MCF 10A (cell line): ENCODE measurements at regions of chr15 and their contacts with region 1.

Region 1: DNA sequence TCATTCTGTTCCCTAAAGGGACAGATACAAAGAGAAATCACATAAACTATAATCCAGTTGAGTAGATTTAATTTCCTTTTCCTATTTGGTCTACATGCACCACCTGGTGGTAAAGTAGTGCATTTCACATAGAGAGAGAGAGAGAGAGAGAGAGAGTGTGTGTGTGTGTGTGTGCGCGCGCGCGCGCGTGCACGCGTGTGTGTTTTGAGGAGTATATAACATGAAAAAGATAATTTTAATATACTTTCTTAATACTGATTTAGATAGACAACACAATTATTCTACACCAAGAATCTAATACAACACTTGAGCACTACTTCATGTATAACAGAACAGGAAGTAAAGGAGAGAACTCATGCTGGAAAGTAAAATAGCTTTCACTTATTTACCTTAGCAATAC is 1.1 kb upstream of the FGF7 start:
- DNase-seq: peak; percentile 70
- H3K4me3 Mint-ChIP-seq: peak overlapping the region; percentile 58
- H3K27ac Mint-ChIP-seq: no peak overlapping the region
- H3K4me1 Mint-ChIP-seq: peaks cover 7% of the 10 kb centered on the region
- H3K27me3 Mint-ChIP-seq: no peaks in the 10 kb centered on the region
- CTCF ChIP-seq: peak; percentile 72

Region 2: GRCh38 chr15:49110158-49110944 is 311.6 kb before region 1 on chr15:
- CTCF ChIA-PET with region 1: no interaction called
- POLR2A ChIA-PET with region 1: no interaction called
- intact Hi-C with region 1: no loop called
- DNase-seq: no peak
- H3K4me3 Mint-ChIP-seq: no peak overlapping the region
- H3K27ac Mint-ChIP-seq: no peak overlapping the region
- H3K4me1 Mint-ChIP-seq: no peaks in the 10 kb centered on the region
- H3K27me3 Mint-ChIP-seq: no peaks in the 10 kb centered on the region
- CTCF ChIP-seq: no peak

Region 3: DNA sequence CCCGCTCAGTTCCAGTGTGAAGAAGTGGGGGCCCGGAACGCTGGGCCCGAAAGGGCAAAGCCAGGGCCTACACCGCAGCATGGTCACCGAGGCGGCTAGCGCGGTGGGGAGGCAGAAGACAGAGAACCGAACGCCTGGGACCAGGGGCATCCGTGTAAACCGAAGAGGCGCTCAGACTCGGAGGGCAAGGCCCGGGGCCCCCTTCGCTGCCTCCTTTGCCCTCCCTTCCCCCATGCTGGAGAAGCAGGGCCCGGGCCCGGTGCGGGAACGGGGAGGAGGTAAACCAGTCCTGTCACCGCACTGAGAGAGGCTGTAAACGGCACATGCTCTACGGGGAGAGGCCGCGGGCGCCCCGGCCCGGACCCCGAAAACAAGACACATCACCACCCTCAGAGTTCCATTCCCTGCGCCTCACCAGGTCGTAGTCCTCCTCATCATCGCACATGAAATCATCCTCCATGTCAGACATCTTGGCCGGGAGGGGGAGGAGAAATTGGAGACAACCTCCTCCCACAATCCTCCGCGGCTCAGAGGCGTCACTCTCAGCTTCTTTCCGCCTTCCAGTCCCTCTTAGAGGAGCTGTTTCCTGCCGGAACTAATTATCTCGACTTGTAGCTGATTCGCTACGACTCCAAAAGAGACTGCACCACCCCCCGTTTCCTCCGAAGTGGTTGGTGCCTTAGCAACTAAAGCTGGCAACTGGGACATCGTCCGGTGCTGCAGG is 266.7 kb before region 1 on chr15 and contains the start of gene COPS2:
- CTCF ChIA-PET with region 1: no interaction called
- POLR2A ChIA-PET with region 1: interaction called, 7 read pairs
- intact Hi-C with region 1: loop called (anchors 5 kb)
- DNase-seq: peak; percentile 98
- H3K4me3 Mint-ChIP-seq: peak within 1 kb of the TSS; percentile 98
- H3K27ac Mint-ChIP-seq: peak within 1 kb of the TSS; percentile 94
- H3K4me1 Mint-ChIP-seq: peaks cover 29% of the 10 kb centered on the region
- H3K27me3 Mint-ChIP-seq: no peaks in the 10 kb centered on the region
- CTCF ChIP-seq: no peak
- total RNA-seq, gene COPS2: 123 and 132 TPM in 2 replicates

Region 4: DNA sequence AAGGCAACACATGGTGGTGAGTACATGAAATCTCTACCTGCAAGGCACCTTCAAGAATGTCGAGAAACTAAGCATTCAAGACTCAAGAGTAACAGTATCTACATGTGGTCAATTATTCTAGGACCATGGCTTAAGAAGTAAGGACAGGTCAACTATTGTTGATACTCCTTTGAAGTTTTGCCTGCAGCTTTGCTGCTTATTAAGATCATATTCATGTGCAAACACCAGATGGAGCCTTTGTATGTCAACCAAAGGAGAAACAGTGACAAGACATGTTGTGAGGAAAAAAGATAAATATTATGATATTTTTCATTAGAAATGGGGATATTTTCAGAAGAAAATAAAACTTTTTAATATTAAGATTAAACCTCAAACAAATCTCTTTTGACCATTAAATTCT is 51.2 kb before region 1 on chr15:
- CTCF ChIA-PET with region 1: interaction called, 12 read pairs
- POLR2A ChIA-PET with region 1: no interaction called
- intact Hi-C with region 1: loop called (anchors 1 kb)
- DNase-seq: peak; percentile 30
- H3K4me3 Mint-ChIP-seq: no peak overlapping the region
- H3K27ac Mint-ChIP-seq: no peak overlapping the region
- H3K4me1 Mint-ChIP-seq: no peaks in the 10 kb centered on the region
- H3K27me3 Mint-ChIP-seq: no peaks in the 10 kb centered on the region
- CTCF ChIP-seq: peak; percentile 29

Region 5: DNA sequence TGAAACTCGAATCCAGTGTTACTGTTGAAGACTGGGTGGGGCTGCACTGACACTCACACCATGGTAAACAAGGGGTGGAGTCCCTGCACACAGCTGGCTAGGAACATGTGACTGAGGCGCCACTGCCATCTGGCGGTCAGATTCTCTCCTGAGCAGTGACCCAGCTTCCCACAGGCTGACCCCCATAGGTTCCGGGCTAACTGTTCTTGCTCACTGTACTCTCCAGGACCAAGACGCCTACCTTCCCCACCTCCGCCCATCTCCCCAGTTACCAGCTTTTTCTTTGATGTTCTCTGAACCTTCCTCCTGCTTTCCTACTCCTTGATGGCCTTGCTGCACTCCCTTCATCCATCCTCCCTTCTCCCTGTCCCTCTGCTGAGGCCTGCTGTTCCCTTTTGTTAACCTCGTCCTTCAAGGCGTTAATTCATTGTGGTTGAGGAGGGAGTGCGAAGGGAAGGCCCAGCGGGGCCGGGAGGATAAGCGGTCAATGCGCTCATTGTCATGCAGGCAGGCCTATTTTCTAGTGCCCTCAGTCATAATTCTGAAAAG is 581.9 kb after region 1 on chr15:
- CTCF ChIA-PET with region 1: interaction called, 5 read pairs
- POLR2A ChIA-PET with region 1: no interaction called
- intact Hi-C with region 1: loop called (anchors 10 kb)
- DNase-seq: peak; percentile 85
- H3K4me3 Mint-ChIP-seq: no peak overlapping the region
- H3K27ac Mint-ChIP-seq: peak overlapping the region; percentile 25
- H3K4me1 Mint-ChIP-seq: no peaks in the 10 kb centered on the region
- H3K27me3 Mint-ChIP-seq: no peaks in the 10 kb centered on the region
- CTCF ChIP-seq: peak; percentile 67

Region 6: GRCh38 chr15:50315814-50316630 is 894.0 kb after region 1 on chr15:
- CTCF ChIA-PET with region 1: interaction called, 5 read pairs
- POLR2A ChIA-PET with region 1: no interaction called
- intact Hi-C with region 1: loop called (anchors 10 kb)
- DNase-seq: peak; percentile 58
- H3K4me3 Mint-ChIP-seq: no peak overlapping the region
- H3K27ac Mint-ChIP-seq: no peak overlapping the region
- H3K4me1 Mint-ChIP-seq: no peaks in the 10 kb centered on the region
- H3K27me3 Mint-ChIP-seq: no peaks in the 10 kb centered on the region
- CTCF ChIP-seq: peak; percentile 59